ENCODE measurements at regions of chr14 and their contacts with region 1.

Region 1: DNA sequence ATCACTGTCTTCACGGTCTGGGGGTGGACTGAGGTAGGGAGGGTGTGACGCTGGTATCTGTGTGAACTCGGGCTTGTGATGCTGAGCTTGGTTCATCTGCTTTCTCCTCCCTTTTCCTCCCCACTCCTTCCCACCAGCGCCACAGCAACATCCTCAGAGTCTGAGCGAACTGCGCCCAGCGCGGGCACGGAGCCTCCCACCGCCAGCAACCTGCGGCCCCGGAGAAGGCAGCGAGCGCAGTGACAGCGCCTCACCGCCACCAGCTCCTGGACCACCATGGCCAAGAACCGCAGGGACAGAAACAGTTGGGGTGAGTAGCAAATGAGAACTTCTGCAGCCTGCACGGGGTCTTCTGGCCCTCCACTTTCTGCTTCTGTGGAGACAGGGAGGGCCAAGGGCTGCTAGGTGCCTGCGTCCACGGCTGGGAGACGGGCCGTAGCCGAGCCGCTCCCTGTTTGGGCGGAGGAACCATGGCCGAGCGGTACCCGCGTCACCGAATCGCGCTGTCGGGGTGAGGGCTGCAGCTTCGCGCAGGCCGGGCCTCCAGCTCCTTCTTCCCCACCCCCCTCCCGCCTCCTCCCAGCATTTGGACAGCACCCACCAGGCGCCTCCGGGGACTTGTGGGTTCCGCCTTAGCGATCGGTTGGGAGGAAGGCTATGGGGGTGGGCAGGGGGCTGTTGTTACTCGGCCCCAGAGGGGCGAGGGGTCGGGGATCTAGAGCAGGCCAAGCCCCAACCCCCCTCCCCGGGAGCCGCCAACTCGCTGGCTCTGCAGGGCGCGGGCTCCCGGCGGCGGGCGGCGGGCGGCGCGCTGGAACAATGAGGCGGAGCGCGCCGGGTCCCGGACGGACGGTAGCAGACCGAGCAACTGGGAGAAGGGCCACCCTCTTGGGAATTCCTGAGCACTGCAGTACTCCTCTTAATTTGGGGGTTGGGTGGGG is at the start of gene ATL1:
- DNase-seq: peak; percentile 68 to 96 (median 80)

Region 2: GRCh38 chr14:50667996-50668825 is 108.0 kb after region 1 on chr14 and contains the start of gene SAV1:
- intact Hi-C with region 1: loop called (anchors 2 kb)
- DNase-seq: peak; percentile 65 to 96 (median 76)

Region 3: DNA sequence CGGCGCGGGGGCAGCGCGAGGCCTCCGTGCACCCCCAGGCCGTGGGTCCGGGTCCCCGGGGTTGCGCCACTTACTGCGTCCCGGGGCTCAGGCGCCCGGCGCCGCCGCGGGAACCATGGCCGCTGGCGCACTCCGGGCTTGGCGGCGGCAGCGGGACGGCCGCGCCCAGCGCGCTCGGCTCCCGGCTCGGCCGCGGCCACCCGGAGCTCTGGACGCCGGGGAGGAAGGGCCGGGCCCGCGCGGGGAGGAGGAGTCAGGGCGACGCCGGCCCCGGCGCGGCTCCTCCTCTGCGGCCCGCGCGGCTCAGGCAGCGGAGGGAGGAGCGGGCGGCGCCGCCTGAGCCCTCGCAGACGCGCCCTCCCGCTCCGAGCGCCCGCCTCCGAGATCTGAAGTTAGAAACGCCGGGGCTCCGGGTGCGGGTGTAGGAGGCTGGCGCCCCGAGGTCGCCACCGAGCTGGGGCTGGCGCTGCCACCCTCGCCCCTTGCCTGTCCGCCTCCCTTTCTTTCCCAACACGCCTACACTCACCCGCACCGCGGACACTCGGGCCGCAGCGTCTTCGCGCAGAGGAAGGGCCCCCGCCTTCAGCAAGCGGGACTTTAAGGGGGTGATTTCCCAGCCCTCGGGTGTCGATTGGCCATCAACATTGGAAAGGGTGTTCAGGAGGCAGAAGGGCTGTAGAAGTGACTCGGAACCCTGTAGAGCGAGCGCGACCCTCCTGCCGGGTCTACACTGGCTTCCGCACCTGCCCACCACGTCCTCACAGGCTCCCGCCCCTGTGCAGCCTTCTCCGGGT is 270.9 kb after region 1 on chr14 and contains the start of gene NIN:
- intact Hi-C with region 1: loop called (anchors 2 kb)
- DNase-seq: peak; percentile 42 to 95 (median 72)